Activated CD4-positive, alpha-beta T cell treated with anti-CD3 and anti-CD28 coated beads for 36 hours (primary cell): ENCODE measurements at regions of chr10 and their contacts with region 1.

Region 1: GRCh38 chr10:73940634-73941221 is 29.8 kb downstream of the PLAU start:
- DNase-seq: peak; percentile 91
- ATAC-seq: peak; percentile 100
- H3K4me3 Mint-ChIP-seq: no peak overlapping the region
- H3K27ac Mint-ChIP-seq: no peak overlapping the region
- H3K4me1 Mint-ChIP-seq: peaks cover 4% of the 10 kb centered on the region
- H3K27me3 Mint-ChIP-seq: no peaks in the 10 kb centered on the region

Region 2: GRCh38 chr10:73848821-73849489 is 91.8 kb before region 1 on chr10:
- CTCF ChIA-PET with region 1: interaction called, 13 read pairs
- POLR2A ChIA-PET with region 1: no interaction called
- intact Hi-C with region 1: loop called (anchors 1 to 2 kb)
- DNase-seq: peak; percentile 95
- ATAC-seq: peak; percentile 99
- H3K4me3 Mint-ChIP-seq: no peak overlapping the region
- H3K27ac Mint-ChIP-seq: peak overlapping the region; percentile 85
- H3K4me1 Mint-ChIP-seq: peaks cover 7% of the 10 kb centered on the region
- H3K27me3 Mint-ChIP-seq: no peaks in the 10 kb centered on the region

Region 3: DNA sequence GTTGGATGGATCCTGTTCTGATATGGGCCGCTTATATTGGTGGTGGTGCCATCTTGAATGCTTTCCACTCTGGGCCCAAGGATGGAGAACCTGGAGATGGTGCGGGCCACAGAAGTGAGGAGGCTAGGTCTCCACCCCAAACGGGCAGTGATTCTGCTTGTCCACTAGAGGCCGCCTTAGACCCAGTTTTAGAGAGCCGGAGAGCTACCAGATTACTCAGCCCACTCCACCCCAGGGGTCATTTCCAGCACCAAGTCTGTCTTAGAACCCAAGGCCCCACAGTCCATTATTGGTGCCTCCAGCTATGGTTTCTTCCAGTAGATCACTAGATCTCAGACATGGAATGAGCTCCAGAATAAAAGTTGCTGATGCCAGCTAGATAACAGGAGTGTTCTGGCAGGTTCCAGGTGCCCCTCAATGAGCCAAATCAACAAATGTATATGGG is 54.6 kb before region 1 on chr10:
- CTCF ChIA-PET with region 1: interaction called, 375 read pairs
- POLR2A ChIA-PET with region 1: interaction called, 5 read pairs
- intact Hi-C with region 1: loop called (anchors 1 kb)
- DNase-seq: peak; percentile 82
- ATAC-seq: peak; percentile 92
- H3K4me3 Mint-ChIP-seq: no peak overlapping the region
- H3K27ac Mint-ChIP-seq: no peak overlapping the region
- H3K4me1 Mint-ChIP-seq: peaks cover 9% of the 10 kb centered on the region
- H3K27me3 Mint-ChIP-seq: no peaks in the 10 kb centered on the region

Region 4: DNA sequence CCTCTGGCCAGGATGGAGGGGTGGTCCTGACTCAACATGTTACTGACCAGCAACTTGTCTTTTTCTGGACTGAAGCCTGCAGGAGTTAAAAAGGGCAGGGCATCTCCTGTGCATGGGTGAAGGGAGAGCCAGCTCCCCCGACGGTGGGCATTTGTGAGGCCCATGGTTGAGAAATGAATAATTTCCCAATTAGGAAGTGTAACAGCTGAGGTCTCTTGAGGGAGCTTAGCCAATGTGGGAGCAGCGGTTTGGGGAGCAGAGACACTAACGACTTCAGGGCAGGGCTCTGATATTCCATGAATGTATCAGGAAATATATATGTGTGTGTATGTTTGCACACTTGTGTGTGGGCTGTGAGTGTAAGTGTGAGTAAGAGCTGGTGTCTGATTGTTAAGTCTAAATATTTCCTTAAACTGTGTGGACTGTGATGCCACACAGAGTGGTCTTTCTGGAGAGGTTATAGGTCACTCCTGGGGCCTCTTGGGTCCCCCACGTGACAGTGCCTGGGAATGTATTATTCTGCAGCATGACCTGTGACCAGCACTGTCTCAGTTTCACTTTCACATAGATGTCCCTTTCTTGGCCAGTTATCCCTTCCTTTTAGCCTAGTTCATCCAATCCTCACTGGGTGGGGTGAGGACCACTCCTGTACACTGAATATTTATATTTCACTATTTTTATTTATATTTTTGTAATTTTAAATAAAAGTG is 23.8 kb before region 1 on chr10:
- CTCF ChIA-PET with region 1: interaction called, 11 read pairs
- POLR2A ChIA-PET with region 1: no interaction called
- intact Hi-C with region 1: no loop called
- DNase-seq: no peak
- ATAC-seq: no peak
- H3K4me3 Mint-ChIP-seq: no peak overlapping the region
- H3K27ac Mint-ChIP-seq: no peak overlapping the region
- H3K4me1 Mint-ChIP-seq: peaks cover 16% of the 10 kb centered on the region
- H3K27me3 Mint-ChIP-seq: peaks cover 25% of the 10 kb centered on the region

Region 5: DNA sequence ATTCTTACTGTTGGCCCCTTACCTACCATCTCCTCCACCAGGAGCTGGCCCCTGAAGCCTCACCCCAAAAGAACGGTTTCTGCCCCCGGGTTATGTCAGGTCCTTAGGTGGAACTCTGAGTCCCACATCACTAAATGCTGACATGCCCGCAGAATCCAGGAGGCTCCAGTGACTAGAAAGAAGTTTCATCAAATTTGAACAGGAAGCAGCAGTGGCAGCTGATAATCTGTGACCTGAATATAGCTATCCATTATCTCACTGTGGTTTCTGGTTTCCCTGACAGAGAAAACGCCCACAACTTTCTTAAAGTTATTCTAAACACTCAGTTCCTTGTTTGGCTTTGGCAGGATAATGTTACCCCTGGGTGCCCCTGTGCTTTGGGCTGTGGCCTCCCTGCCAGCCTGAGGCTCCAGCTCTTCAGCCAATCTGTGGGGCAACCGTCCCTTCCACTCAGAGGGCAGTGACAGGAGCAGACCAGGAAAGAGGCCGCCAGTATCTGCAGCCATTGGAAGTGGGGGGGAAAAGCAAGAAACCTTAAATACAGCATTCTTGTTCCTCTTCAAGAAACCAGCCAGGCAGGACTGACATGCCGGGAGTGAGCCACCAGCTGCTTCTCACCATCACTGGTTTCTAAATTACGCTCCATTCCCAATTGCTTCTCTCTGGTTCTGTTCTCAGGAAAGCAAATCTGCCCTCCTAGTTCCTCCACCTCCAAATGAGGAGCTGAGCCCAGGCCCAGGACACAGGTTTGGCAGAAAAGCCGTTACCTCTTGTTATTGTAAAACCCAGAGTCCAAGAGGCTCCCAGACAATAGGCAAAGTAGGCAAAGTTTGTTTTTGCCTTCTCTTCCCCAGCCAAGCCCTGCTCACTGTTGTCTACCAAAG is 16.0 kb after region 1 on chr10:
- CTCF ChIA-PET with region 1: interaction called, 18 read pairs
- POLR2A ChIA-PET with region 1: no interaction called
- intact Hi-C with region 1: no loop called
- DNase-seq: peak; percentile 44
- ATAC-seq: peak; percentile 66
- H3K4me3 Mint-ChIP-seq: peak overlapping the region; percentile 35
- H3K27ac Mint-ChIP-seq: peak overlapping the region; percentile 87
- H3K4me1 Mint-ChIP-seq: peaks cover 58% of the 10 kb centered on the region
- H3K27me3 Mint-ChIP-seq: no peaks in the 10 kb centered on the region

Region 6: GRCh38 chr10:74067373-74068352 is 126.9 kb after region 1 on chr10:
- CTCF ChIA-PET with region 1: no interaction called
- POLR2A ChIA-PET with region 1: no interaction called
- intact Hi-C with region 1: no loop called
- DNase-seq: no peak
- ATAC-seq: no peak
- H3K4me3 Mint-ChIP-seq: no peak overlapping the region
- H3K27ac Mint-ChIP-seq: no peak overlapping the region
- H3K4me1 Mint-ChIP-seq: no peaks in the 10 kb centered on the region
- H3K27me3 Mint-ChIP-seq: no peaks in the 10 kb centered on the region

Region 7: GRCh38 chr10:74314166-74314565 is 373.4 kb after region 1 on chr10:
- CTCF ChIA-PET with region 1: no interaction called
- POLR2A ChIA-PET with region 1: no interaction called
- intact Hi-C with region 1: no loop called
- DNase-seq: no peak
- ATAC-seq: no peak
- H3K4me3 Mint-ChIP-seq: no peak overlapping the region
- H3K27ac Mint-ChIP-seq: no peak overlapping the region
- H3K4me1 Mint-ChIP-seq: peaks cover 3% of the 10 kb centered on the region
- H3K27me3 Mint-ChIP-seq: no peaks in the 10 kb centered on the region